ENCODE measurements at regions of chr5 and their contacts with region 1.

Region 1: GRCh38 chr5:77849308-77849900 is 73.3 kb upstream of the TBCA start:
- DNase-seq: no peak
- H3K4me3 Mint-ChIP-seq: no peak overlapping the region
- H3K27ac Mint-ChIP-seq: no peak overlapping the region
- H3K4me1 Mint-ChIP-seq: peaks cover 11% of the 10 kb centered on the region
- H3K27me3 Mint-ChIP-seq: peaks cover 77% of the 10 kb centered on the region

Region 2: DNA sequence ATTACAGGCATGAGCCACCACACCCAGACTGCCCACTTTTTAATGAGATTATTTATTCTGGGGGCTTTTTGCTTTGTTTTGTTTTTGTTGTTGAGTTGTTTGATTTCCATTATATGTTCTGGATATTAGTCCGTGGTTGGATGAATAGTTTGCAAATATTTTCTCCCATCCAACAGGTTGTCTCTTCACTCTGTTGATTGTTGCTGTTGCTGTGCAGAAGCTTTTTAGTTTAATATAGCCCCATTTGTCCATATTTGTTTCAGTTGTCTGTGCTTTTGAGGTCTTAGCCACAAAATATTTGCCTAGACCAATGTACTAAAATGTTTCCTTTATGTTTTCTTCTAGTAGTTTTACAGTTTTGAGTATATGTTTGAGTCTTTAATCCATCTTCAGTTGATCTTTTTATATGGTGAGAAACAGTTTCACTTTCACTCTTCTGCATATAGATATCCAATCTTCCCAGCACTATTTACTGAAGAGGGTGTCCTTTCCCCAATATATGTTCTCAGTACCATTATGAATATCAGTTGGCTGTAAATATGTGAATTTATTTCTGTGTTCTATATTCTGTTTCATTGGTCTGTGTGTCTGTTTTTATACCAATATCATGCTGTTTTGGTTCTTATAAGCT is 43.1 kb before region 1 on chr5:
- intact Hi-C with region 1: loop called (anchors 1 kb)
- DNase-seq: no peak
- H3K4me3 Mint-ChIP-seq: peak overlapping the region; percentile 62
- H3K27ac Mint-ChIP-seq: no peak overlapping the region
- H3K4me1 Mint-ChIP-seq: peaks cover 6% of the 10 kb centered on the region
- H3K27me3 Mint-ChIP-seq: peaks cover 2% of the 10 kb centered on the region

Region 3: GRCh38 chr5:78858364-78858763 is 1009.0 kb after region 1 on chr5:
- intact Hi-C with region 1: no loop called
- DNase-seq: no peak
- H3K4me3 Mint-ChIP-seq: no peak overlapping the region
- H3K27ac Mint-ChIP-seq: no peak overlapping the region
- H3K4me1 Mint-ChIP-seq: no peaks in the 10 kb centered on the region
- H3K27me3 Mint-ChIP-seq: no peaks in the 10 kb centered on the region

Region 4: DNA sequence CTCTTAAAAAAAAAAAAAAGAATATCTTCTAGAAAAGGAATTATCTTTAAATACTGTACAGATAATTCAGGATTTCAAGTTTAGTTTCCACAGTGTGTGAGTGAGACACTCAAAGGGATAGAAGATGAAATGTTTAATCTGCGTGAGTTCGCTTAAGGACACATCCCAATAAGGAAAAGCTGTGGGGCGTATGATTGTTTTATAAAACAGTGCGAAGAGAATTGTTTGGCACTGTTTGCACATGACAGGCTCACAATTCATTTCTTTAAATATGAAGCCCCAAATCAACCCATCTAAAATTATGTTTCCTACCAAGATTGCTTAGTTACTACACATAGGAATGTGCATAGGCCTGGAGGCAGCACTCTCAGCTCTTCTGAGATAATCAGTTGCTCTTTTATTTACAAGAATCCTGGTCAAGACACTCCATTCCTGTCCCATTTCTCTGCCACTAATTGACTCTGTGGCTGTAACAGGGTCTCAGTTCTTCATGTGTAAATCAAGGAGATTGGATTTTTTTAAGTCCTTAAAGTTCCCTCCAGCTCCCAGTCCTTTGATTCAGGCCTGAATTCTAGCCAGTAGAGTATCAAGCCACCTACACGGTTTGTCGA is 1322.3 kb after region 1 on chr5:
- intact Hi-C with region 1: no loop called
- DNase-seq: no peak
- H3K4me3 Mint-ChIP-seq: no peak overlapping the region
- H3K27ac Mint-ChIP-seq: no peak overlapping the region
- H3K4me1 Mint-ChIP-seq: no peaks in the 10 kb centered on the region
- H3K27me3 Mint-ChIP-seq: no peaks in the 10 kb centered on the region

Measured in activated CD4-positive, alpha-beta T cell treated with anti-CD3 and anti-CD28 coated beads, Interleukin-2, amount 10 ng/mL, durations not matched to agents 24 days and 14 days (primary cell).